Posterior vena cava (tissue), 2 donors: ENCODE measurements at regions of chr21 and their contacts with region 1.

Region 1: GRCh38 chr21:29155118-29155932 is 24.9 kb downstream of the MAP3K7CL start:
- DNase-seq: peak; percentile 94

Region 2: DNA sequence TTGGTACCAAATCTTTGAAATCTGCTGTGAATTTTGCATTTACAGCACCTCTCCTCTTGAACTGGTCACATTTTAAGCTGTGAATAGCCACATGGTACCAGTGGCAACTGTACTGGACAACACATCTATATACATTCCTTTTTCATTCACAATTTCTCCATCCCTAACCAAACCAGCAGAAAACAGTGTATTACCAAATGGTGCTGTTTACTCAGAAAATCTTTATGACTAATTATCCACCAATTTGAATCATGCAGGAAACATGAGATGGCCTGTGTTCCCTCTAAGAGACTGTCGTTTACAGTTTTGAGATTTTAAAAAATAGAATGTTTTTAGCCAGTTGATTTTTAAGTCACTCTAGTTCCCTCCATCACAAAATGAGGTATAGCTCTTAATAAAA is 64.3 kb before region 1 on chr21:
- intact Hi-C with region 1: loop called in 1 of 2 experiments (anchors 5 kb)
- DNase-seq: no peak

Region 3: DNA sequence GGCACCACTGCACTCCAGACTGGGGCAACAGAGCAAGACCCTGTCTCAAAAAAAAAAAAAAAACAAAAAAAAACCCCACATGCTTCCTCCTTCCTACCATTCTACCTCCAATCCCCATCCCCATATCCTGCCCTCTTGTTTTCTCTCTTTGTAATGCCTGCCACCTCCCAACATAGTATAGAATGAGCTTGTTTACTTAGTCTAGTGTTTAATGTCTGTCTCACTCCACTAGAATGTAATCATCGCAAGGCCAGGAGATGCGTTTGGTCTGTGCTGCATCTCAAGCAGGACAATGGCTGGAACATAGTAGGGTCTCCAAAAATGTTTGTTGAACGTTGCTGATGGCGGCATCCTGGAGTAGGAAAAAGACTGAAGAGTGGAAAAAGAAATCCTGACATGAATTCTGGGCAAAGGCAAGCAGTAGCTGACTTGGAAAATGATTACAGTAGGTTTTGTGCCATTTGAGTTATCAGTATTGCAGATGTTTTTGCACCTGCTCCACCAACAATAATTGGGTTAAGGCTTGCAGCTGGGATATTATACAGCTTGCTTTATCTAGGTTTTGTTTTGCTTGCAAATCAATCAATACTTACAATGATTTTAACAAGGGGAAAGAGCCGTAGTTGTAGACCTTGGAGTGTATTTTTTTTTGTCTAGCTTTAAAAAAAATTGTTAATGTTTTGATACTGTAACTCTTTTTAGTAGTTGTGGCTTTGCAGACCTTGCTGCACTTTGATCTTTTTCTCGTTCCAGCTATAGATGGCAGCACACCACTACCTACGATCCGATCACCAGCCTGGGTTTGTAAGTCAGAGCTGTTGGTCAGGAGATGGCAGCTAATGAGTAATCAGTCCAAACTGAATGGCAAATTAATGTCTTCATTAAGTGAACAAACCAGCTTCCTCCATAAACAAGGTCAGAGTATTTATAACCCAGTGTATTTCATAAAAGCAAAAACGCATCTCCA is 205.8 kb after region 1 on chr21:
- intact Hi-C with region 1: no loop called
- DNase-seq: no peak